ENCODE measurements at regions of chr2 and their contacts with region 1.

Region 1: DNA sequence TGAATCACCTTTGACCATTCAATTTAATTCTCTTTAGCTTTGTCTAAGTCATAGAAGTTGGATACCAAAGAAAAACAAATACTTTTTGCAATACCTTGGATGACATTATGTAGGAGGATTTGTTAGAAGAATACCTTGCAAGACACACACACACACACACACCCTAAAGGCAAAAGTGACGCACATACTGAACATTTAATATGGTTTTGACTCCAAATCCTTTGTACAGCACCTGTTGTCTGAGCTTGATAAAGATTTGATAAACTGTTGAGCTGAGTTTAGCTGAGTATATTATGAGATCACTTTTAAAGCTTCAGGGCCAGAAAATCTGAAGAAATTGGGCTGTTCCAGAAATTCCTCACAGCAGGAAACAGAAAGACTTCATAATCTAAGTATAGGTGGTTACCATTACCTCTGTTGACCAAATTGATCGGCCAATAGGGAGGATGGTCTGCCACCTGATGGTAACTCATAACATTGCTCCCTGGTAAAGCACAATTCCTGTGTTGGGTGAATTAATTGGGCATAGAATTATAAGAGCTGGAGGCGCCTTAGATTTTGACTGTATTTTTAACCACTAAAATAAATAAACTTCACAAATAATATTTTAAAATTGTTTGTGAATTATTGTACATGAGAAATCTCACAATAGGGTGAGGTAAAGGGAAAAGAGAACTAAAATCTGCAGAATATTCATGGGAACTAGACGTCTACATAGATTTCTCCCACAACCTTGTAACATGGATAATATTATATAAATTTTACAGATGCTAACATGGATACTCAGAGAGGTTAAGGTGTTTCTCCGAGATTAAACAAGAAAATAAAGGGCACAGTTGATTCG is 21.9 kb upstream of the RPIA start:
- DNase-seq: peak; percentile 32
- ATAC-seq: peak; percentile 93
- H3K4me3 ChIP-seq: no peak overlapping the region
- H3K27ac ChIP-seq: no peak overlapping the region
- H3K4me1 ChIP-seq: no peaks in the 10 kb centered on the region
- H3K27me3 ChIP-seq: no peaks in the 10 kb centered on the region
- CTCF ChIP-seq: peak; percentile 64 to 80 (median 74); a peak in 5 of 6 replicates
- EP300 ChIP-seq: no peak
- POLR2A ChIP-seq: no peak
- RAD21 ChIP-seq: peak; percentile 94

Region 2: DNA sequence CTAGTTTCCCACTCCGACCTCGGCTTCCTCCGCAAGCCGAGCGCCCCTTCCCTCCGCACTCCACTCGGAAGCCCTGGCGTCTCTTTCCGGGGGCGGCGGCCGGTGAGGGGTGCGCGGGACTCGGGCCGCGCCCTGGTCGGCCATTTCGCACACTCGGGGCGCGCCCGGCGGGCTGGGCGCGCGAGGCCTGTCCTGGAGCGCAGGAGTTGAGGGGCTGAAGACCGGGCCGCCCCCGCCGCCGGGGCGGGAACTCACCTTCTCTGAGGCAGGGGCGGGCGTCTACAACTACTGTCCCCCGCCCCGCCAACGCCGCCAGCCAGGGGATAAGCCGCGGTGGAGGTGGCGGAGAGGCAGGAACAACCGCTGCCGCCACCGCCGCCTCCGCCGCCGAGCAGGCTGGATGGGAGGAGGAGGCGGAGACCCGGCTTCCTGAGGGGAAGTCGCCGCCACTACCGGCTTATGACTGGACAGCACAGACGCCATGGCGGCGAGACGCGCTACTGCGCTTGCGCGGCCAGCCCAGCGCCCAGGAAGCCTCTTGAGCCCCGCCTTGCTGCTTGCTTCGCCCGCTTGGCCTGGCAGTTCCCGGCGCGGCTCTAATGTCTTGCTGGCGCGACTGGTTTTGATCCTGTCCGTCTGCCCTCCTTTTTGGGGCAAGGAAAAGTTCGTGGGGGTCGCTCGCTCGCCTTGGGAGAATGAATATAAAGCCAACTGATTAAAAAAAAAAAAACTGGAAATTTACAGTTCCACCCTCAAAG is 614.0 kb before region 1 on chr2 and contains the start of gene KRCC1:
- CTCF ChIA-PET with region 1: no interaction called
- POLR2A ChIA-PET with region 1: interaction called, 3 read pairs
- RAD21 ChIA-PET with region 1: no interaction called
- SMC1A ChIA-PET with region 1: no interaction called
- in situ Hi-C with region 1: loop called (anchors 25 kb)
- intact Hi-C with region 1: no loop called
- DNase-seq: peak; percentile 88
- ATAC-seq: peak; percentile 97
- H3K4me3 ChIP-seq: peak within 1 kb of the TSS; percentile 93
- H3K27ac ChIP-seq: peak within 1 kb of the TSS; percentile 94
- H3K4me1 ChIP-seq: peaks cover 4% of the 10 kb centered on the region
- H3K27me3 ChIP-seq: no peaks in the 10 kb centered on the region
- CTCF ChIP-seq: no peak
- EP300 ChIP-seq: no peak
- POLR2A ChIP-seq: peak; percentile 99
- RAD21 ChIP-seq: no peak
- polyA plus RNA-seq, gene KRCC1: 12.4 to 14.0 TPM

Region 3: GRCh38 chr2:88080545-88080944 is 589.0 kb before region 1 on chr2:
- CTCF ChIA-PET with region 1: no interaction called
- POLR2A ChIA-PET with region 1: no interaction called
- RAD21 ChIA-PET with region 1: no interaction called
- SMC1A ChIA-PET with region 1: no interaction called
- in situ Hi-C with region 1: no loop called
- intact Hi-C with region 1: no loop called
- DNase-seq: no peak
- ATAC-seq: no peak
- H3K4me3 ChIP-seq: no peak overlapping the region
- H3K27ac ChIP-seq: no peak overlapping the region
- H3K4me1 ChIP-seq: no peaks in the 10 kb centered on the region
- H3K27me3 ChIP-seq: peaks cover 0 to 2% of the 10 kb centered on the region in 2 experiments; a peak in 1 of 4 replicates
- CTCF ChIP-seq: no peak
- EP300 ChIP-seq: no peak
- POLR2A ChIP-seq: no peak
- RAD21 ChIP-seq: no peak

Region 4: GRCh38 chr2:88561646-88562388 is 107.8 kb before region 1 on chr2:
- CTCF ChIA-PET with region 1: interaction called, 17 read pairs
- POLR2A ChIA-PET with region 1: no interaction called
- RAD21 ChIA-PET with region 1: interaction called, 4 read pairs
- SMC1A ChIA-PET with region 1: interaction called, 6 read pairs
- in situ Hi-C with region 1: no loop called
- intact Hi-C with region 1: no loop called
- DNase-seq: no peak
- ATAC-seq: peak; percentile 70
- H3K4me3 ChIP-seq: no peak overlapping the region; the same call in 1 of the 2 replicates
- H3K27ac ChIP-seq: peak overlapping the region; percentile 70
- H3K4me1 ChIP-seq: peaks cover 24% of the 10 kb centered on the region
- H3K27me3 ChIP-seq: no peaks in the 10 kb centered on the region
- CTCF ChIP-seq: no peak
- EP300 ChIP-seq: no peak
- POLR2A ChIP-seq: no peak
- RAD21 ChIP-seq: no peak

Region 5: DNA sequence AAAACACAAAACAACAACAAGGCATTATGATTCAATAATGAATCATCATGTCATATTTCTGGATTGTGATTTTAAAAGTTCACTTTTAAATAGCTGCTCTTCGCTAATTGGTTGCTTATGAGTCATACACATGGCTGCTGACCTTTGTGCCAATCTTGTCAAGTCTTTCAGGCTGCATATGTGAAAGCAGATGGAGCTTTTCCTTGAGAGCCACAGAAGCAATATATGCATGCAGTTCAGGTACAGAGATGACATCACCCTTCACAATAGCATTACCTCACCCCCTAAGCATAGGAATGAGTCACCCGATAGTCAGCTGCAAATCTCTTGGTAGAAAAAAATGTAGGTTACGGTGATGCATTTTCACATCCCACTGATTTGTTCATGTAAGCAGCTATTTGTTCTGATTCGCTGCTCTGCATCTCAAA is 69.5 kb before region 1 on chr2:
- CTCF ChIA-PET with region 1: interaction called, 399 read pairs
- POLR2A ChIA-PET with region 1: no interaction called
- RAD21 ChIA-PET with region 1: interaction called, 27 read pairs
- SMC1A ChIA-PET with region 1: interaction called, 270 read pairs
- in situ Hi-C with region 1: no loop called
- intact Hi-C with region 1: no loop called
- DNase-seq: peak; percentile 98
- ATAC-seq: peak; percentile 97
- H3K4me3 ChIP-seq: peak overlapping the region; percentile 14; the same call in 1 of the 2 replicates
- H3K27ac ChIP-seq: peak overlapping the region; percentile 61
- H3K4me1 ChIP-seq: peaks cover 36% of the 10 kb centered on the region
- H3K27me3 ChIP-seq: no peaks in the 10 kb centered on the region
- CTCF ChIP-seq: no peak
- EP300 ChIP-seq: peak; percentile 86 to 96
- POLR2A ChIP-seq: no peak
- RAD21 ChIP-seq: 0 out of 2 replicates have a peak, but pooled peaks have one; percentile 4

Region 6: GRCh38 chr2:88632569-88632968 is 37.0 kb before region 1 on chr2:
- CTCF ChIA-PET with region 1: interaction called, 27 read pairs
- POLR2A ChIA-PET with region 1: no interaction called
- RAD21 ChIA-PET with region 1: interaction called, 14 read pairs
- SMC1A ChIA-PET with region 1: interaction called, 5 read pairs
- in situ Hi-C with region 1: no loop called
- intact Hi-C with region 1: loop called (anchors 5 kb)
- DNase-seq: no peak
- ATAC-seq: no peak
- H3K4me3 ChIP-seq: no peak overlapping the region
- H3K27ac ChIP-seq: no peak overlapping the region
- H3K4me1 ChIP-seq: peaks cover 4% of the 10 kb centered on the region; the same call in 1 of the 2 replicates
- H3K27me3 ChIP-seq: no peaks in the 10 kb centered on the region
- CTCF ChIP-seq: no peak
- EP300 ChIP-seq: no peak
- POLR2A ChIP-seq: no peak
- RAD21 ChIP-seq: no peak

Region 7: DNA sequence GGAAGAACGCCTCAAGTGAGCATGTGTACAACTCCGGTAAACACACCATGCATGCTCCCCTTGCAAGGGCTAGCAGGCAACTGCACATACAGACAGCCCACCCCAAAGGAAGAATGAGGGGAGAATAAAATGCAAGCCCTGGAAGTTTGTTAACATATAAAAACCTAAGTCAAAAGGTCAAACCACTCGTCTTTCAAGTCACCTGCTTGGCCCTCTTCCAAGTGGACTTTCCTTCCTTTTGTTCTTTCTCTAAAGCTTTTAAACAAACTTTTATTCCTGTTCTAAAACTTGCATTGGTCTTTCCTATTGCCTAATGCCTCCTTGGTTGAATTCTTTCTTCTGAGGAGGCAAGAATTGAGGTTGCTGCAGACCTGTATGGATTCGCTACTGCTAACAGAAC is 16.7 kb after region 1 on chr2:
- CTCF ChIA-PET with region 1: interaction called, 10 read pairs
- POLR2A ChIA-PET with region 1: interaction called, 6 read pairs
- RAD21 ChIA-PET with region 1: interaction called, 11 read pairs
- SMC1A ChIA-PET with region 1: interaction called, 3 read pairs
- in situ Hi-C with region 1: no loop called
- intact Hi-C with region 1: no loop called
- DNase-seq: no peak
- ATAC-seq: no peak
- H3K4me3 ChIP-seq: no peak overlapping the region
- H3K27ac ChIP-seq: no peak overlapping the region
- H3K4me1 ChIP-seq: no peaks in the 10 kb centered on the region
- H3K27me3 ChIP-seq: no peaks in the 10 kb centered on the region
- CTCF ChIP-seq: no peak
- EP300 ChIP-seq: no peak
- POLR2A ChIP-seq: no peak
- RAD21 ChIP-seq: no peak

Region 8: GRCh38 chr2:88765154-88765900 is 95.7 kb after region 1 on chr2:
- CTCF ChIA-PET with region 1: no interaction called
- POLR2A ChIA-PET with region 1: no interaction called
- RAD21 ChIA-PET with region 1: no interaction called
- SMC1A ChIA-PET with region 1: no interaction called
- in situ Hi-C with region 1: no loop called
- intact Hi-C with region 1: no loop called
- DNase-seq: no peak
- ATAC-seq: no peak
- H3K4me3 ChIP-seq: peak overlapping the region; percentile 60
- H3K27ac ChIP-seq: no peak overlapping the region
- H3K4me1 ChIP-seq: no peaks in the 10 kb centered on the region
- H3K27me3 ChIP-seq: no peaks in the 10 kb centered on the region; a peak in 1 of 4 replicates
- CTCF ChIP-seq: no peak
- EP300 ChIP-seq: no peak
- POLR2A ChIP-seq: no peak
- RAD21 ChIP-seq: no peak

Measured in GM12878 (cell line).